B cell (primary cell): ENCODE measurements at regions of chr19 and their contacts with region 1.

Region 1: DNA sequence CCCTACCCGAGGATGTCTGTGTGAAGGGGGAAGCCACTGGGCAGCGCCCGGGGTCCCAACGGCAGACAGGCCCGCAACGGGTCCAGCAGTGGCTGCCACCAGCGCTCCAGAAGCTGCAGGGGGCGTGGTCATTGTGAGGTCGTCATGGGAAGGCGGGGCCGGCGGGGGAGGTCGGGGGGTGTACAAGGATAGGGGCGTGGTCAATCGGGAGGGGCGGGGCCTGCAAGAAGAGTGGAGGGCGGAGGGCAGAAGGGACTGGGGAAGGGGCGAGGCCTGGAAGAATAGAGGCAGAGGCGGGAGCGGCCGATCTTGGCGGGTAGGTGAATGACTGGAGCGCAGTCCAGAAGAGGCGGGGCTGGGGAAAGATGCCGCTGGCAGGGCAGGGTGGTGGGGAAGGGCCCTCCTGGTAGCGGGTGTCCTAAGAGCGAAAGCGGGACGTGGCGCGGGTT is 4.4 kb downstream of the FUZ start:
- DNase-seq: peak; percentile 92
- ATAC-seq: peak; percentile 56
- H3K4me3 ChIP-seq: peak overlapping the region; percentile 28 to 87 (median 79)
- H3K4me3 Mint-ChIP-seq: peak overlapping the region; percentile 96
- H3K27ac ChIP-seq: peak overlapping the region; percentile 63 to 66
- H3K27ac Mint-ChIP-seq: peak overlapping the region; percentile 92
- H3K4me1 ChIP-seq: peaks cover 30 to 46% of the 10 kb centered on the region in 2 donors
- H3K4me1 Mint-ChIP-seq: peaks cover 49% of the 10 kb centered on the region
- H3K27me3 ChIP-seq: no peaks in the 10 kb centered on the region
- H3K27me3 Mint-ChIP-seq: no peaks in the 10 kb centered on the region
- CTCF ChIP-seq: no peak

Region 2: DNA sequence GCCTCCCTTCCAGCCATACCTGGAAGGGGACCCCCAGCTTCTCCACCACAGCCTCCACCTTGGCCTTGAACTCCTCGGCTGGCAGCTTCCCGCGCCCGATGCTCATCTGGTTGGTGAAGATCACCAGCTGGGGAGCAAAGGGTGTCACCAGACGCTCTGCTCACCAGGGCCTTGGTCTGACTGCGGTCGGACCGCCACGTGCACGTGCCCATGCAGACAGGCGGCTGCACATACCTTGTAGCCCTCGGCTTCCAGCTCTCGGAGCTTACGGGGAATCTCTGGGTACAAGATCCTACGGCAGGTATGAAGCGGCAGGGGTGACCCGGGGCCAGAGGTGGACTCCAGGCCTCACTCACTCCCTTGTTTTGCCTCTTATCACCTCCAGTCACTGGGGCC is 55.2 kb after region 1 on chr19:
- CTCF ChIA-PET with region 1: interaction called, 7 read pairs
- POLR2A ChIA-PET with region 1: interaction called, 10 read pairs
- intact Hi-C with region 1: loop called (anchors 1 kb)
- DNase-seq: no peak
- ATAC-seq: no peak
- H3K4me3 ChIP-seq: no peak overlapping the region
- H3K4me3 Mint-ChIP-seq: no peak overlapping the region
- H3K27ac ChIP-seq: no peak overlapping the region
- H3K27ac Mint-ChIP-seq: no peak overlapping the region
- H3K4me1 ChIP-seq: peaks cover 18 to 35% of the 10 kb centered on the region in 2 donors
- H3K4me1 Mint-ChIP-seq: peaks cover 40% of the 10 kb centered on the region
- H3K27me3 ChIP-seq: no peaks in the 10 kb centered on the region
- H3K27me3 Mint-ChIP-seq: no peaks in the 10 kb centered on the region
- CTCF ChIP-seq: no peak